ENCODE measurements at regions of chr16 and their contacts with region 1.

Region 1: DNA sequence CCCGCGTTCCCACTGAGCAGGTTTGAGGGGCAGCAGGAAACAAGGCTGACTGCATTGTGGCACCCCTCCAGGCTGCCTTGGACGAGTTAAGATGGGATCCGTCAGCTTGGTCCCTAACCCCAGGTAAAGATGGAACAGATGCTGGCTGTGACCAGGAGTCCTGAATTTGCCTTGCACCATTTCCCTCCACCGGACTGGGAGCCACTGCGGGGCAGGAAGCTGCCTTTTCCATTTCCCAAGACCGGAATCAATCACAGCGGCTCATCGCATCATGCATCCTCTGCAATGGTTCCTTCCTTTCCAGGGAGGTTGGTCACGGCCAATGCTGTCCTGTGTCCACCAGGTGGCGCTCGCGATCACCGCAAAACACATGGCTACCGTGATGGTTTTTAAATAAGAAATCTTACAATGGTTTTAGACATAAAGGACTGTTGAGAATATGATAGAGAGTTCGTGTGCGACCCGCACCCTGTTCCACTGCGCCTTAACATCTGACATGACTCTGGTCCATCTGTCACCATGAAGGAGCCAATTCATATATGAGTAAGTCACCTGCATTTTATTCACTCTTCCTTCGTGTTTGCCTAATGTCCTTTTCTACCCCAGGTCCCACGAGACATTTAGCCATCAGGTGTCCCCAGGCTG is 6.8 kb upstream of the MEAK7 start:
- DNase-seq: peak; percentile 89
- H3K4me3 ChIP-seq: peak overlapping the region; percentile 37
- H3K27ac ChIP-seq: no peak overlapping the region
- H3K4me1 ChIP-seq: peaks cover 12% of the 10 kb centered on the region
- H3K27me3 ChIP-seq: no peaks in the 10 kb centered on the region

Region 2: GRCh38 chr16:84220851-84221250 is 290.5 kb before region 1 on chr16:
- in situ Hi-C with region 1: no loop called
- DNase-seq: peak; percentile 55
- H3K4me3 ChIP-seq: no peak overlapping the region
- H3K27ac ChIP-seq: no peak overlapping the region
- H3K4me1 ChIP-seq: no peaks in the 10 kb centered on the region
- H3K27me3 ChIP-seq: no peaks in the 10 kb centered on the region; the same call in 1 of the 2 replicates

Region 3: DNA sequence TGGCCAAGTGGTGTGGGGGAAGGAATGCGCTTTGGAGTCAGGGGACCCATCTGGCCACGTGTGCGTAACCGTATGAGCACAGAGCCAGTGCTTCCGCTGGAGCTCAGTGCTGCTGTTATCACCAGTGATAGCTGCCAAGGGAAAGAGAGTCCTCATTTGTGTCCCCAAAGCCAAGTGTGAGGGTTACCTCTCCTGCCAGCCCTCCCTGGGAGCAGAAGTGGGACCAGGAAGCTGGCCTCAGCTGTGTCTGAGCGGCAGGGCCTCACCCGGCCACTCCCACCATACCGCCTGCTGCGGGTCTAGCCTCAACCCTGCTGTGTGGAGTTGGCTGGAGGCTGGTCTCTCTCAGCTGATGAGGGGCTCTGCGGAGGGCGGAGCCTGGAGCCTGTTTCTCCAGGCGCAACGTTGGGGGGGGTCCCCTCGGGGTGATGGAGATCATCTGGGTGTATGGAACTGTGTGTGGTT is 51.3 kb before region 1 on chr16:
- in situ Hi-C with region 1: no loop called
- DNase-seq: no peak
- H3K4me3 ChIP-seq: no peak overlapping the region
- H3K27ac ChIP-seq: no peak overlapping the region
- H3K4me1 ChIP-seq: no peaks in the 10 kb centered on the region
- H3K27me3 ChIP-seq: no peaks in the 10 kb centered on the region

Region 4: DNA sequence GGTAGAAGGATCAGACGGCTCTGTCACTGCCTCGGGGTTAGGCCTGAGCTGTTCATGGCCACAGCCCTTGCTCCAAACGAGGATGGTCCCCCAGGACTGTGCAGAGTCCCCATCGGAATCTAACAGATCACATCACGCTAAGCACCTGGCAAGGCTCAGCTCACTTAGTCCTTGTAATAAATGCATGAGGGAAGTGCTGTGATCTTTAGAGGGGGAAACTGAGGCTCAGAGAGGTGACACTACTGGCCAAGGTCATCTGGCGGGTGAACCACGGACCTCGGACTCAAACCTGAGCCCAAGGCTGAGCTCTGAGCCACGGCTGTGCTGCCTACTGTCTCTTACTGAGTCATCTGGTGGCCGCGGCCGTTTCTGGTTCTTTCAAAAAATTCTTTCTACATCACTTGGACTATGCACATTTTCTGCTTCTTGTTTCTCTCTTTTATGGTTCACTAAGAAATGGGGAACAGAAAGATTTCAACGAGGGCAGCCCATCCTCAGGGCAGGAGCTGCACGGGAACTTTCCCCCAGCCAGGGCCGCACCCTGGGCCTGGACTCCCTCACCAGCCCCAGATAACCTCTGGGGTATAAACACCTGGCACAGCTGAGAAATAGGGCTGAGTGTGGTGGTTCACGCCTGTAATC is 51.0 kb after region 1 on chr16:
- in situ Hi-C with region 1: no loop called
- DNase-seq: no peak
- H3K4me3 ChIP-seq: no peak overlapping the region
- H3K27ac ChIP-seq: no peak overlapping the region
- H3K4me1 ChIP-seq: no peaks in the 10 kb centered on the region
- H3K27me3 ChIP-seq: no peaks in the 10 kb centered on the region

Region 5: DNA sequence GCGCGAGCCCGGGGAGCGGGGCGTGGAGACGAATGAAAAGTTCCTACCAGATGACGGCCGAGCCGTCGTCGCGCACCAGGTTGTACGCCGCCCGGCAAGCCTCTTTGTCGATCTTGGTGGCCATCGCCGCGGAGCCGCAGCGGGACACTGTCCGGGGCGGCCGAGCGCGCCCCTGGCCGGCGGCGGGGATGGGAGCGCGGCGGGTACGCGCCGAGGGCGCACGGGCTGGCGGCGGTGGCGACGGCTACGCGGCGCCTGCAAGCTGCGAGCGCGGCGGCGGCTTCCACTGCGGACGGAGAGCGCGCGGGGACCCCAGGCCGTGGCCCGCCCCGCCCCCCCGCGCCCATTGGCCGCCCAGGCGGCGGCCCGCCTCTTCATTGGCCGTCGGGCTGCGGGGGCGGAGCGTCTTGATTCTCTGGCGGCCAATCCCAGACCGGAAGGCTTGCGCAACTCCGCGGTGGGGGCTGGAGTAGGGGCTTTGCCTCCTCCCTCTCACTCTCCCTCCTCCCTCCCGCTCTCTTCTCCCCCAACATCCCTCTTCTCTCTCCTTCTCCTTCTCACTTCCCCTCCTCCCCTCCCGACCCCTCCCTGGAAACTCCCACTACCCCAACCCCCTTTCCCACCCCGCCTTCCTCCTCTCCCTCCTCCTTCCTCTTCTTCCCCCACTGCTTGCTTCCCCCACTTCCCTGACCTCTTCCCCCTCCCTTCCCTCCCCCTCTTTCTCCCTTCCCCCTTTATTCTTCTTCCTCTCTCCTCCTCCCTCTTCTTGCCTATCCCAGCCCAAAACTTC is 106.7 kb after region 1 on chr16 and contains the start of gene COTL1:
- in situ Hi-C with region 1: loop called (anchors 5 kb)
- DNase-seq: peak; percentile 99
- H3K4me3 ChIP-seq: peak within 1 kb of the TSS; percentile 92
- H3K27ac ChIP-seq: peak within 1 kb of the TSS; percentile 90
- H3K4me1 ChIP-seq: peaks cover 16% of the 10 kb centered on the region
- H3K27me3 ChIP-seq: no peaks in the 10 kb centered on the region
- total RNA-seq, gene COTL1: 144 and 145 TPM in 2 replicates

Region 6: DNA sequence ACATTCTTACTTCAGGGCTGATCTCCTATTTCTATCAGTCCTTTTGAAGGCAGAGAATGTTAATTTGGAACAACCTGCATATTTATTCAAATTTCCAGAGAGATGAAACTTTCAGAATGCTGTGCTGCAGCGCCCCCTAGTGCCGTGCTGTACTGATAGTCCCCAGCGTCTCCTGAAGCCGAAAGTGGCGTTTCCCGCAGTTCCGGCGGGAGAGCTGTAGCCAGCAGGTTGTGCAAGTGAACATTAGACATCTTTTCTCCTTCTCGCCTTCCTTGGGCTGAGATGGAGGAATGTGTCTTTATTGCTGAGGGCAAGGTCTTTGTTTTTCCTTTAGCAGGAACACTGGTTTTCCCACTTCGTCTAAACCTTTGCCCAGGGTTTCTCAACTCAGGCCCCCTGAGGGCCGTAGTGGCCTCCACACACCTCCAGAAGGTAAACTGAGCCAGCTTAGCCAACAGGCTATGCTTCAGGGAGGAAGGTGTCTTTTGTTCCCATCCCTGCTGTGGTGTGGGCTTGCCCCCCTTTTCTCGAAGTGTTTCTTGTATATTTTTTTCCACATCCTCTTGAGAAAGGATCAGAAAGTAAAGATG is 214.9 kb after region 1 on chr16:
- in situ Hi-C with region 1: loop called (anchors 5 kb)
- DNase-seq: peak; percentile 91
- H3K4me3 ChIP-seq: no peak overlapping the region
- H3K27ac ChIP-seq: no peak overlapping the region
- H3K4me1 ChIP-seq: peaks cover 48% of the 10 kb centered on the region
- H3K27me3 ChIP-seq: no peaks in the 10 kb centered on the region

Region 7: GRCh38 chr16:85098565-85098964 is 587.3 kb after region 1 on chr16:
- in situ Hi-C with region 1: no loop called
- DNase-seq: no peak
- H3K4me3 ChIP-seq: no peak overlapping the region
- H3K27ac ChIP-seq: no peak overlapping the region
- H3K4me1 ChIP-seq: no peaks in the 10 kb centered on the region
- H3K27me3 ChIP-seq: peaks cover 20% of the 10 kb centered on the region

Measured in GM23248 (cell line).